PC-9 (cell line): ENCODE measurements at regions of chr12 and their contacts with region 1.

Region 1: GRCh38 chr12:123678981-123679380 is 8.1 kb downstream of the TCTN2 start:
- DNase-seq: no peak
- H3K4me3 ChIP-seq: no peak overlapping the region
- H3K27ac ChIP-seq: no peak overlapping the region
- H3K4me1 ChIP-seq: no peaks in the 10 kb centered on the region
- H3K27me3 ChIP-seq: no peaks in the 10 kb centered on the region
- CTCF ChIP-seq: no peak

Region 2: GRCh38 chr12:123337070-123337469 is 341.9 kb before region 1 on chr12:
- CTCF ChIA-PET with region 1: no interaction called
- POLR2A ChIA-PET with region 1: no interaction called
- intact Hi-C with region 1: no loop called
- DNase-seq: no peak
- H3K4me3 ChIP-seq: no peak overlapping the region
- H3K27ac ChIP-seq: no peak overlapping the region
- H3K4me1 ChIP-seq: no peaks in the 10 kb centered on the region
- H3K27me3 ChIP-seq: no peaks in the 10 kb centered on the region
- CTCF ChIP-seq: no peak

Region 3: GRCh38 chr12:125124318-125124966 is 1445.5 kb after region 1 on chr12:
- CTCF ChIA-PET with region 1: no interaction called
- POLR2A ChIA-PET with region 1: interaction called, 17 read pairs
- intact Hi-C with region 1: no loop called
- DNase-seq: peak; percentile 29 to 81
- H3K4me3 ChIP-seq: no peak overlapping the region
- H3K27ac ChIP-seq: peak overlapping the region; percentile 84
- H3K4me1 ChIP-seq: peaks cover 31% of the 10 kb centered on the region
- H3K27me3 ChIP-seq: no peaks in the 10 kb centered on the region
- CTCF ChIP-seq: no peak